ENCODE measurements at regions of chr16 and their contacts with region 1.

Region 1: DNA sequence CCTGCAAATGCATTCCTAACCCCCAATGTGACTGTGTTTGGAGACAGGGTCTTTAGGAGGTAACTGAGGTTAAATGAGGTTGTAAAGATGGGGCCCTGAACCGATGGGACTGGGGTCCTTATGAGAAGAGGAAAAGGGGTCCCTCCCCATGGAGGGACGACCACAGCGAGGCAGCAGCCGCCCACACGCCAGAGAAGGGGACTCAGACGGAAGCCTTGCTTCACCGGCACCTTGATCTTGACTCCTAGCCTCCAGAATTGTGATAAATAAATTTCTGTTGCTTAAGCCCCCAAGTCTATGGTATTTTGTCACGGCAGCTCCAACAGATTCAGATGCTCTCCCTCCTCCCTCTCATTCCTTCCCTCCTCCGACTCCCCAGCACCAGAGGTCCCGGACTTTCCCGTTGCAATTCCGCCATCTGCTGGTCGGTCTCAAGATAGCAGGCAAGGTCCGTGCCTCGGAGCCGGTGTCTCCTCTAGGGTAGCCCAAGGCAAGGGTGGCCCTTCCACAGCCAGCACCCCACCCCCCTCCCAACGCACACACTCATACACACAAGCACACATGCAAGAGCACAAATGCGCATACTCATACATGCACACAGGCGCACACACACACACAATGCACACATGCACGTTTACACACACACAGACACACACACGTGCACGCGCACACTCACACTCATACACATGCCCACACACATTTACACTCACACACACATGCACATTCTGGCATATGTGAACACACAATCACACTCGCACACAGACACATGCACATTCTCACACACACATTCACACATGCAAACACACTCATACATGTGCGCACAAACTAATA is 23.1 kb upstream of the C16orf78 start:
- DNase-seq: peak in 1 of 5 donors; percentile 11
- H3K4me3 ChIP-seq: no peak overlapping the region
- H3K4me3 Mint-ChIP-seq: no peak overlapping the region
- H3K27ac ChIP-seq: no peak overlapping the region
- H3K27ac Mint-ChIP-seq: no peak overlapping the region
- H3K4me1 ChIP-seq: no peaks in the 10 kb centered on the region
- H3K4me1 Mint-ChIP-seq: peaks cover 0 to 3% (median 0%) of the 10 kb centered on the region in 4 donors
- H3K27me3 ChIP-seq: no peaks in the 10 kb centered on the region
- H3K27me3 Mint-ChIP-seq: peaks cover 10% of the 10 kb centered on the region in 2 donors

Region 2: GRCh38 chr16:48687421-48688038 is 663.0 kb before region 1 on chr16:
- CTCF ChIA-PET with region 1: no interaction called
- POLR2A ChIA-PET with region 1: no interaction called
- intact Hi-C with region 1: loop called (anchors 5 kb)
- DNase-seq: peak in 3 of 5 donors; percentile 4 to 8 (median 5)
- H3K4me3 ChIP-seq: no peak overlapping the region
- H3K4me3 Mint-ChIP-seq: no peak overlapping the region
- H3K27ac ChIP-seq: no peak overlapping the region
- H3K27ac Mint-ChIP-seq: no peak overlapping the region
- H3K4me1 ChIP-seq: no peaks in the 10 kb centered on the region
- H3K4me1 Mint-ChIP-seq: peaks cover 0 to 3% (median under 1%) of the 10 kb centered on the region in 4 donors
- H3K27me3 ChIP-seq: no peaks in the 10 kb centered on the region
- H3K27me3 Mint-ChIP-seq: peaks cover 7 to 19% of the 10 kb centered on the region in 2 donors

Region 3: DNA sequence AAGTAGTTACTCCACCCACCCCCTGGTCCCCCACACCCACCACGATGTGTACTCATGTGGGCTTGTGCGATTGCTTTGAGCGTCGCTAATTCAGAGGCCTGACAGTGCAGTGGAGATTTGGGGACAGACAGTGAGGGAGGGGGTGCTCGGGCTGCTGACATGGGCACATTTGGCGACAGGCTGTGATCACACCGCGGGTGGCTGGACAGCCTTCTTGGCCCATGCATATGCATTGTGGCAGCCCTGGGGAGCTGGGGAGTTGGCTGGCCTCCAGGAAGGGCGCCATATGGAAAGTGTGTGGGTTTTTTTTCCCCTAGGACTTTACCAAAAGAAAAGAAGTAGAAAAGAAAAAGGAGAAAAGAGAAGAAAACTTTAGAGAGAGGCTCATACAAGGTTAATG is 465.0 kb before region 1 on chr16:
- CTCF ChIA-PET with region 1: no interaction called
- POLR2A ChIA-PET with region 1: no interaction called
- intact Hi-C with region 1: no loop called
- DNase-seq: no peak
- H3K4me3 ChIP-seq: no peak overlapping the region
- H3K4me3 Mint-ChIP-seq: no peak overlapping the region
- H3K27ac ChIP-seq: no peak overlapping the region
- H3K27ac Mint-ChIP-seq: no peak overlapping the region
- H3K4me1 ChIP-seq: no peaks in the 10 kb centered on the region
- H3K4me1 Mint-ChIP-seq: no peaks in the 10 kb centered on the region
- H3K27me3 ChIP-seq: no peaks in the 10 kb centered on the region
- H3K27me3 Mint-ChIP-seq: no peaks in the 10 kb centered on the region

Measured in CD4-positive, alpha-beta memory T cell (primary cell).